MCF 10A (cell line): ENCODE measurements at regions of chr2 and their contacts with region 1.

Region 1: DNA sequence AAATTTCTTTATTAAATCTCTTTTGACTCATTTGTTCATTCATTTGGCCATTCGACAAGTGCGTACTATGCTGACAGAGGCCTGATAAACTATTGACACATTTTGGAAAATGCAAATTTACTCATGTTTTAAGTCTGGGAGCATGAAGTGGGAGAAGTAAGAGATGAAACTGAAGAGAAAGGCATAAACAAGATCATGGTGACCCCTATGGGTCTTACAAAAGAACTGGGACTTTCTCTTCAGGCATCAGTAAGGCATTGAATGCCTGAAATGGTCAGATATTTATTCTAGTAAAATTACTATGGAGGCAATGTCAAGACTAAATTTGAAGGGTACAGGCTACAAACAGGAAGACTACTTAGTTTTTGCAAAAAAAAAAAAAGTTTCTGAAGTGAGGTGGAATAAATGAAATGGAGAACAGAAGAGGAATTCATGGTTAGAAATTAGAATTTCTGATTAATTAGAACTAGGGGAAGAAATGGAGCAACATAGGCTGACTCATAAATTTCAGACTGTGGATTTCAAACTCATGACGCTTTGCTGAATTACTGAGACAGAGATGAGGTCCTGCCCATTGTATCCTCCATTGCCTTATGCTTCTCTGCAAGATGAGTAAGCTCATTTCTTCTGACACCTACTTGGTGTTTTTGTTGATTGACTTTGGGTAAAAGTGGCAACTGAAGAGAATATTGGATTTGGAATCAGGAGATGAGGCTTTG is 32.7 kb downstream of the VSNL1 start:
- DNase-seq: peak; percentile 51
- H3K4me3 Mint-ChIP-seq: no peak overlapping the region
- H3K27ac Mint-ChIP-seq: no peak overlapping the region
- H3K4me1 Mint-ChIP-seq: peaks cover 9% of the 10 kb centered on the region
- H3K27me3 Mint-ChIP-seq: no peaks in the 10 kb centered on the region
- CTCF ChIP-seq: no peak

Region 2: DNA sequence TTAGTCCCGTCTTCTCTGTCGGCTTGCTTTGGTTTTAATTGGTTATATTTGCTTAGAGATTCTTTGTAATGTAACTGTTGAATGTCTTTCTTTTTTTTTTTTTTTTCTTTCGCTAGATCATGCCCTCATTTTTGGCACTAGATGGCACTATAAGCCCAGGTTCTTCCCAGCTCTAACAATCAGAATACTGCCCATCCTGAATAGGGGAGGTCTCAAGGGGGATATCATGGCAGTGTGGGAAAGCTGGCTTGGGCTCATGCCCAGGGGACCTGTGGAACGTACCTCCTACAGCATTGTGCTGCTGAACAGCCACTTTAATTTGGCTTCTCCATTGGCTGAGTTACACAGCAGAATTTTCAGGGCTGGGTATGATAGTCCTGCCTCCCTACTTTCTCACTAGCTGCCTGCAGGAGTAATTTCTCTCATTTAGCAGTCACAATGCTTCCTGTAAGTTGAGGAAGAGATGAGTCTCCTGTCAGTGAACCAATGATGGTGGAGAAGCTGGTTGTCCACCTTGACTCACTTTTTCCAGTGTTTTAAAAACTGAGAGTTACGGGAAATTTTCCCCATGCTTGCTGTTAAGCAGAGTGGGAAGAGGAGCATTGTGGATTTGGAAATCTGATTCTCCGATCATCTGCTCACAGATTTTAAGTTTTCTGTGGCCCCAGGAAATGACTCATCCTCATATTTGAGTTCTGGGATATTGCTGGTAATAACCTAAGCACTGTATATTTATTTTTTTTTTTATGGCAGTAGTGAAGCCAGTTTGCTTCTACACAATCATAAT is 102.2 kb before region 1 on chr2:
- CTCF ChIA-PET with region 1: interaction called, 3 read pairs
- POLR2A ChIA-PET with region 1: no interaction called
- intact Hi-C with region 1: loop called (anchors 10 kb)
- DNase-seq: peak; percentile 76
- H3K4me3 Mint-ChIP-seq: no peak overlapping the region
- H3K27ac Mint-ChIP-seq: no peak overlapping the region
- H3K4me1 Mint-ChIP-seq: peaks cover 8% of the 10 kb centered on the region
- H3K27me3 Mint-ChIP-seq: no peaks in the 10 kb centered on the region
- CTCF ChIP-seq: peak; percentile 53